PC-3 (cell line): ENCODE measurements at regions of chr10 and their contacts with region 1.

Region 1: DNA sequence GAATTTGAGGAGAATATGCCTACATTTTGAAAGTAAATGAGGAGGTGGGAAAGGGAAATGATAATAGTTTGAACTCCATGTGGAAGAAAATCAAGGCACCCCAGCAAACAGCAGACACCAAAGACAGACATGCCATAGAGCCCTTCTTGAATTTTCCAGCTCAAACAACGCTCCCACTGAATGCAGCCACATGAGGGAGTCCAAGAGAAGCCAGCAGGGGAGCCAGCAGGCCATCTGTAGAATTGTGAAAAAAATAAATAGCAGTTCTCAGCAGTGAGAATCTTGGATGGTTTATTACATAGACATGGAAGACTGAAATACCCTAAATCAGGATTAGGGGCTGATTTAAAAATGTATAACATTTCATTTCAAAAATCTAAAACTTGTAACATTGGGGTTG is 1567.3 kb upstream of the LRRTM3 start:
- DNase-seq: peak; percentile 76
- ATAC-seq: peak; percentile 94
- H3K4me3 ChIP-seq: no peak overlapping the region
- H3K27ac ChIP-seq: no peak overlapping the region
- H3K4me1 ChIP-seq: no peaks in the 10 kb centered on the region
- H3K27me3 ChIP-seq: no peaks in the 10 kb centered on the region
- CTCF ChIP-seq: peak; percentile 96

Region 2: DNA sequence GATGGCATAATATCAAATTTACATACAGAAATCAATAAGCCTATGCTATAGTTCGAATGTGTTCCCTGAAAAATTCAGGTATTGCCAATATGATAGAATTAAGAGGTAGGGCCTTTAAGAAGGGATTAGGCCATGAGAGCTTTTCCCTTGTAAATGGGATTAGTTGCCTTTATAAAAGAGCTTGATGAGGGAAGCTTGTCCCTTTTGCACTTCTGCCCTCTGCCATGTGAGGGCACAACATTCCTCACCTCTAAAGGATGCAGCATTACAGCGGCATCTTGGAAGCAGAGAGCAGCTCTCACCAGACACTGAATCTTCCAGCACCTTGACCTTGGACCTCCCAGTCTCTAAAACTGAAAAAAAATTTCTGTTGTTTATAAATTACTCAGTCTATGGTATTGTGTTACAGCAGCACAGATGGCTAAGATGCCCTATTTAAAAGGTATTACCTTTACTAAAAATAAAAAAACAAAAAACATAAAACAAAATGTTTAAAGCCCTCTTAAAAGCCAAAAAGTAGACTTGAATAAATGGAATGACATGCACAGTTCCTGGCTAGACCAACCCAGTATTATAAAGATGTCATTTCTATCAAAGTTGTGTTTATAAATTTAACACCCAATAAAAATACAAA is 927.8 kb before region 1 on chr10:
- CTCF ChIA-PET with region 1: interaction called, 5 read pairs
- POLR2A ChIA-PET with region 1: no interaction called
- intact Hi-C with region 1: loop called (anchors 10 kb)
- DNase-seq: peak; percentile 81
- ATAC-seq: peak; percentile 99
- H3K4me3 ChIP-seq: no peak overlapping the region
- H3K27ac ChIP-seq: no peak overlapping the region
- H3K4me1 ChIP-seq: no peaks in the 10 kb centered on the region
- H3K27me3 ChIP-seq: no peaks in the 10 kb centered on the region
- CTCF ChIP-seq: peak; percentile 88

Region 3: DNA sequence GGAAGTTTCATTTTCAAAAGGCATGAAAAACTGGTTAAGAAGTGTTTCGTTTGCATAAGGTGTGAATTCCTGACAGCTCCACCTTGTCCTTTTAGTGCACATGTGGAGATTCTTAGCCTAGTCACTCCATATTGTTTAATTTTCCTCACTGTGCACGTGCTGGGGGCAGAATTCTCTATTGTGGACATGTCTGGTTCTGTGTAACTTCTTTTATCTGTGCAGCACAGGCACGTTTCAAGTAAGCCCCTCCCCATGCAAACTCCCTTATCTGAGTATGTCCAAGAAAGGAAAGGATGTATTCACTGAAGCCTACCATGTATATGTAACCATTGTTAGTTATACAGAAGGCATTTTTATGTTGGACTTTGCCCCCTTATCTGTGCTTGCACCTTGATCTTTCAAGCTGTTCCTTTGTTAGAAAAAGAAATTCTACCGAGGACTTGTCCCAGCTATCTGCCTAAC is 491.0 kb before region 1 on chr10:
- CTCF ChIA-PET with region 1: no interaction called
- POLR2A ChIA-PET with region 1: no interaction called
- intact Hi-C with region 1: loop called (anchors 5 kb)
- DNase-seq: no peak
- ATAC-seq: peak; percentile 16; the same call in 1 of the 2 replicates
- H3K4me3 ChIP-seq: no peak overlapping the region
- H3K27ac ChIP-seq: no peak overlapping the region
- H3K4me1 ChIP-seq: no peaks in the 10 kb centered on the region
- H3K27me3 ChIP-seq: no peaks in the 10 kb centered on the region
- CTCF ChIP-seq: no peak

Region 4: GRCh38 chr10:65320236-65321026 is 38.1 kb before region 1 on chr10:
- CTCF ChIA-PET with region 1: no interaction called
- POLR2A ChIA-PET with region 1: no interaction called
- intact Hi-C with region 1: no loop called
- DNase-seq: no peak
- ATAC-seq: peak; percentile 38; the same call in 1 of the 2 replicates
- H3K4me3 ChIP-seq: no peak overlapping the region
- H3K27ac ChIP-seq: no peak overlapping the region
- H3K4me1 ChIP-seq: no peaks in the 10 kb centered on the region
- H3K27me3 ChIP-seq: no peaks in the 10 kb centered on the region
- CTCF ChIP-seq: no peak

Region 5: DNA sequence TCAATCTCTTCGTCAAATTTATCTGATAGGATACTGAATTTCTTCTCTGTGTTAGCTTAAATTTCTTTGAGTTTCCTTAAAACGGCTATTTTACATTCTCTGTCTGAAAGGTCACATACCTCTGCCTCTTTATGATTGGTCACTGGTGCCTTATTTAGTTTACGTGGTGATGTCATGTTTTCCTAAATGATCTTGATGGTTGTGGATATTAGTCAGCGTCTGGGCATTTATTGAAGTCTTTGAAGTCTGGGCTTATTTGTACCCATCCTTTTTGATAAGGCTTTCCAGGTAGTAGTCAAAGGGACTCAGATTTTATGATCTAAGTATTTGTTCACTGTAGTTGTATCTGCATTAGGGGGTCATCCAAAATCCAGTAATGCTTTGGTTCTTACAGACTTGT is 159.8 kb after region 1 on chr10:
- CTCF ChIA-PET with region 1: no interaction called
- POLR2A ChIA-PET with region 1: no interaction called
- intact Hi-C with region 1: no loop called
- DNase-seq: peak; percentile 54
- ATAC-seq: peak; percentile 43
- H3K4me3 ChIP-seq: no peak overlapping the region
- H3K27ac ChIP-seq: no peak overlapping the region
- H3K4me1 ChIP-seq: no peaks in the 10 kb centered on the region
- H3K27me3 ChIP-seq: no peaks in the 10 kb centered on the region
- CTCF ChIP-seq: no peak

Region 6: GRCh38 chr10:65570143-65571010 is 211.8 kb after region 1 on chr10:
- CTCF ChIA-PET with region 1: interaction called, 3 read pairs
- POLR2A ChIA-PET with region 1: no interaction called
- intact Hi-C with region 1: loop called (anchors 5 kb)
- DNase-seq: peak; percentile 89
- ATAC-seq: peak; percentile 93
- H3K4me3 ChIP-seq: peak overlapping the region; percentile 78
- H3K27ac ChIP-seq: peak overlapping the region; percentile 45
- H3K4me1 ChIP-seq: peaks cover 15% of the 10 kb centered on the region
- H3K27me3 ChIP-seq: no peaks in the 10 kb centered on the region
- CTCF ChIP-seq: no peak

Region 7: GRCh38 chr10:65818990-65819389 is 460.4 kb after region 1 on chr10:
- CTCF ChIA-PET with region 1: no interaction called
- POLR2A ChIA-PET with region 1: no interaction called
- intact Hi-C with region 1: no loop called
- DNase-seq: no peak
- ATAC-seq: peak; percentile 43; the same call in 1 of the 2 replicates
- H3K4me3 ChIP-seq: no peak overlapping the region
- H3K27ac ChIP-seq: no peak overlapping the region
- H3K4me1 ChIP-seq: no peaks in the 10 kb centered on the region
- H3K27me3 ChIP-seq: 0 out of 2 replicates have a peak, but pooled peaks cover 3% of the 10 kb centered on the region
- CTCF ChIP-seq: no peak

Region 8: DNA sequence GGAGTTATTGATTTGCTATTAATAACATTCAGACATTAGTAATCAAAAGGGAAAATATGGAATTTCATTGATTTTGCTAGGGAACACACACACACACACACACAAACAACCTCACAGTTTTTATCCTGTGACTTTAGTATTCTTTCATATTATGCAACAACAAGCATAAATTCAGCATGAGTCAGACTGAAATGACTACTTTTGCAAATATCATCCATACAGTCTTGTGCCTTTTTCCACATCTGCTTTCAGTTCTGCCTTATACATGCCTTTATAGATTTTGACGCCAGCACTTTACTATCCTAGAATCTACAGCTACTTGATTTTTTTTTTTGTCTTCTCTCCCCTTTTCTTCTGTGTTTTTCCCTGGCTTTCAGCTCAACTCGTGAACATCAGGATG is 591.5 kb after region 1 on chr10:
- CTCF ChIA-PET with region 1: no interaction called
- POLR2A ChIA-PET with region 1: no interaction called
- intact Hi-C with region 1: loop called (anchors 5 kb)
- DNase-seq: peak; percentile 84
- ATAC-seq: peak; percentile 90
- H3K4me3 ChIP-seq: no peak overlapping the region
- H3K27ac ChIP-seq: no peak overlapping the region
- H3K4me1 ChIP-seq: peaks cover 4% of the 10 kb centered on the region; the same call in 1 of the 2 replicates
- H3K27me3 ChIP-seq: no peaks in the 10 kb centered on the region
- CTCF ChIP-seq: no peak

Region 9: GRCh38 chr10:66180581-66181318 is 822.2 kb after region 1 on chr10:
- CTCF ChIA-PET with region 1: no interaction called
- POLR2A ChIA-PET with region 1: no interaction called
- intact Hi-C with region 1: loop called (anchors 1 kb)
- DNase-seq: peak; percentile 93
- ATAC-seq: peak; percentile 74
- H3K4me3 ChIP-seq: no peak overlapping the region
- H3K27ac ChIP-seq: no peak overlapping the region
- H3K4me1 ChIP-seq: no peaks in the 10 kb centered on the region
- H3K27me3 ChIP-seq: no peaks in the 10 kb centered on the region
- CTCF ChIP-seq: peak; percentile 95